ENCODE measurements at regions of chr12 and their contacts with region 1.

Region 1: GRCh38 chr12:56468216-56469006 is at the start of gene SPRYD4:
- DNase-seq: peak; percentile 95
- H3K4me3 Mint-ChIP-seq: peak within 1 kb of the TSS; percentile 96
- H3K27ac Mint-ChIP-seq: peak within 1 kb of the TSS; percentile 97
- H3K4me1 Mint-ChIP-seq: peaks cover 32% of the 10 kb centered on the region
- H3K27me3 Mint-ChIP-seq: no peaks in the 10 kb centered on the region
- total RNA-seq, gene SPRYD4: 2.2 TPM

Region 2: GRCh38 chr12:56189176-56189917 is 279.1 kb before region 1 on chr12 and contains the start of gene SMARCC2:
- CTCF ChIA-PET with region 1: interaction called, 9 read pairs
- intact Hi-C with region 1: loop called (anchors 1 kb)
- DNase-seq: peak; percentile 93
- H3K4me3 Mint-ChIP-seq: peak within 1 kb of the TSS; percentile 95
- H3K27ac Mint-ChIP-seq: peak within 1 kb of the TSS; percentile 92
- H3K4me1 Mint-ChIP-seq: peaks cover 33% of the 10 kb centered on the region
- H3K27me3 Mint-ChIP-seq: no peaks in the 10 kb centered on the region
- total RNA-seq, gene SMARCC2: 75.8 to 79.0 TPM

Region 3: GRCh38 chr12:56258057-56258819 is 210.2 kb before region 1 on chr12 and contains the start of gene ANKRD52:
- CTCF ChIA-PET with region 1: interaction called, 3 read pairs
- intact Hi-C with region 1: loop called (anchors 2 kb)
- DNase-seq: peak; percentile 72
- H3K4me3 Mint-ChIP-seq: peak within 1 kb of the TSS; percentile 83
- H3K27ac Mint-ChIP-seq: peak within 1 kb of the TSS; percentile 59
- H3K4me1 Mint-ChIP-seq: peaks cover 18% of the 10 kb centered on the region
- H3K27me3 Mint-ChIP-seq: no peaks in the 10 kb centered on the region
- total RNA-seq, gene ANKRD52: 23.6 to 25.6 TPM

Region 4: GRCh38 chr12:56299853-56300643 is 168.4 kb before region 1 on chr12 and contains the start of gene CS:
- CTCF ChIA-PET with region 1: interaction called, 5 read pairs
- intact Hi-C with region 1: loop called (anchors 1 kb)
- DNase-seq: peak; percentile 99
- H3K4me3 Mint-ChIP-seq: peak within 1 kb of the TSS; percentile 91
- H3K27ac Mint-ChIP-seq: peak within 1 kb of the TSS; percentile 92
- H3K4me1 Mint-ChIP-seq: peaks cover 42% of the 10 kb centered on the region
- H3K27me3 Mint-ChIP-seq: no peaks in the 10 kb centered on the region
- total RNA-seq, gene CS: 330 to 336 TPM

Region 5: GRCh38 chr12:56359851-56360767 is 108.3 kb before region 1 on chr12 and contains the start of gene STAT2:
- CTCF ChIA-PET with region 1: interaction called, 20 read pairs
- intact Hi-C with region 1: loop called (anchors 1 kb)
- DNase-seq: peak; percentile 99
- H3K4me3 Mint-ChIP-seq: peak within 1 kb of the TSS; percentile 93
- H3K27ac Mint-ChIP-seq: peak within 1 kb of the TSS; percentile 93
- H3K4me1 Mint-ChIP-seq: peaks cover 20% of the 10 kb centered on the region
- H3K27me3 Mint-ChIP-seq: no peaks in the 10 kb centered on the region
- total RNA-seq, gene STAT2: 109 to 119 TPM

Region 6: GRCh38 chr12:56488041-56488955 is 19.9 kb after region 1 on chr12 and contains the start of gene GLS2:
- CTCF ChIA-PET with region 1: no interaction called
- intact Hi-C with region 1: loop called (anchors 1 kb)
- DNase-seq: peak; percentile 79
- H3K4me3 Mint-ChIP-seq: peak within 1 kb of the TSS; percentile 84
- H3K27ac Mint-ChIP-seq: no peak within 1 kb of the TSS
- H3K4me1 Mint-ChIP-seq: peaks cover 16% of the 10 kb centered on the region
- H3K27me3 Mint-ChIP-seq: peaks cover 19% of the 10 kb centered on the region
- total RNA-seq, gene GLS2: 4.6 to 5.5 TPM